ENCODE measurements at regions of chr6 and their contacts with region 1.

Region 1: DNA sequence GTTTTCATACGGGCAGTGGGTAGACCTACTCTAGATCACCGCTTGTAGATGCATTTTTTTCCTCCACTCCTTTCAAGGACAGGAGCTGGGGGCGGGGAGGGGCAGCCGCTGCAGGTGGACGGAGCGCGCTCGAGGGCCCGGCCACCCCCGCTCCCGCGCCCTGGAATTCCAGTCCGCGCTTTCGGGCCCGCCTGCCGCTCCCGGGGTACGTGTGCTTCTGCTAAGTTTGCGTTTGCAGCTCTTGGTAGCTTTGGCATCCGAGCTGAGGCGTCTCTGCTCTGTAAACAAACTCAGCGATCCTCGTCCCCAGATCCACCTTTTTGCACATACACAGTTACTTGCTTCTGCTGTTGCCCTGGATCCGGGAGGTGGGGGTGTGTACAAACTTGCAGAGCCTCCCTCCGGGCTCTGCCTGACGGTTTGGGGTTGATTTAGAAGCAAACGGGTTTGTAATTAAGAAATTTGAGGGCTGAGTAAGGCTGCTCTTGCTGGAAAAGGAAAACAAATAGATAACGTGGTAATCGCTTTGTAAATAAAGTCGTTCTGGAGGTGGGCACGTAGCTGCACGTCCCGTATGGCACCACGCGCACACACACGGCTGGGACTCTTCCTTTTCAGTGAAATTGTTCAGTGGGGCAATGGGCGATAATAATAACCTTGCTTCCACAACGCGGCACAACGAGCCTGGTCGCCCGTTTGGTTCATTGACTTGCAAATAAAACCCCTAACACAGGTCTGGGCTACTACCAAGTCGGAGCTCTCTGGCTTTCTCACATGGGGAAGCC is 976 bp upstream of the CITED2 start:
- DNase-seq: peak; percentile 90
- ATAC-seq: peak; percentile 57
- H3K4me3 Mint-ChIP-seq: peak overlapping the region; percentile 99
- H3K27ac Mint-ChIP-seq: peak overlapping the region; percentile 97
- H3K4me1 Mint-ChIP-seq: peaks cover 33% of the 10 kb centered on the region
- H3K27me3 Mint-ChIP-seq: no peaks in the 10 kb centered on the region

Region 2: GRCh38 chr6:138773177-138774091 is 602.0 kb before region 1 on chr6 and contains the start of gene CCDC28A:
- CTCF ChIA-PET with region 1: no interaction called
- POLR2A ChIA-PET with region 1: interaction called, 5 read pairs
- intact Hi-C with region 1: loop called in 1 of 2 experiments (anchors 1 kb)
- DNase-seq: peak; percentile 95
- ATAC-seq: peak; percentile 91
- H3K4me3 Mint-ChIP-seq: peak within 1 kb of the TSS; percentile 84
- H3K27ac Mint-ChIP-seq: peak within 1 kb of the TSS; percentile 98
- H3K4me1 Mint-ChIP-seq: peaks cover 31% of the 10 kb centered on the region
- H3K27me3 Mint-ChIP-seq: no peaks in the 10 kb centered on the region
- total RNA-seq, gene CCDC28A: 14.8 to 16.8 TPM

Region 3: GRCh38 chr6:139124887-139125672 is 250.3 kb before region 1 on chr6:
- CTCF ChIA-PET with region 1: interaction called, 13 read pairs
- POLR2A ChIA-PET with region 1: no interaction called
- intact Hi-C with region 1: loop called in 1 of 2 experiments (anchors 2 kb)
- DNase-seq: peak; percentile 90
- ATAC-seq: peak; percentile 96
- H3K4me3 Mint-ChIP-seq: peak overlapping the region; percentile 58
- H3K27ac Mint-ChIP-seq: peak overlapping the region; percentile 95
- H3K4me1 Mint-ChIP-seq: peaks cover 51% of the 10 kb centered on the region
- H3K27me3 Mint-ChIP-seq: no peaks in the 10 kb centered on the region

Region 4: GRCh38 chr6:139219271-139219729 is 156.1 kb before region 1 on chr6:
- CTCF ChIA-PET with region 1: interaction called, 94 read pairs
- POLR2A ChIA-PET with region 1: interaction called, 3 read pairs
- intact Hi-C with region 1: no loop called
- DNase-seq: peak; percentile 86
- ATAC-seq: peak; percentile 100
- H3K4me3 Mint-ChIP-seq: no peak overlapping the region
- H3K27ac Mint-ChIP-seq: peak overlapping the region; percentile 73
- H3K4me1 Mint-ChIP-seq: peaks cover 10% of the 10 kb centered on the region
- H3K27me3 Mint-ChIP-seq: no peaks in the 10 kb centered on the region

Region 5: GRCh38 chr6:139418480-139419117 is 43.2 kb after region 1 on chr6:
- CTCF ChIA-PET with region 1: no interaction called
- POLR2A ChIA-PET with region 1: no interaction called
- intact Hi-C with region 1: loop called in 1 of 2 experiments (anchors 1 kb)
- DNase-seq: no peak
- ATAC-seq: no peak
- H3K4me3 Mint-ChIP-seq: no peak overlapping the region
- H3K27ac Mint-ChIP-seq: no peak overlapping the region
- H3K4me1 Mint-ChIP-seq: no peaks in the 10 kb centered on the region
- H3K27me3 Mint-ChIP-seq: no peaks in the 10 kb centered on the region

Region 6: GRCh38 chr6:139881728-139882211 is 506.3 kb after region 1 on chr6:
- CTCF ChIA-PET with region 1: no interaction called
- POLR2A ChIA-PET with region 1: no interaction called
- intact Hi-C with region 1: loop called in 1 of 2 experiments (anchors 5 kb)
- DNase-seq: peak; percentile 33
- ATAC-seq: peak; percentile 61
- H3K4me3 Mint-ChIP-seq: no peak overlapping the region
- H3K27ac Mint-ChIP-seq: no peak overlapping the region
- H3K4me1 Mint-ChIP-seq: peaks cover 2% of the 10 kb centered on the region
- H3K27me3 Mint-ChIP-seq: peaks cover 2% of the 10 kb centered on the region

Region 7: DNA sequence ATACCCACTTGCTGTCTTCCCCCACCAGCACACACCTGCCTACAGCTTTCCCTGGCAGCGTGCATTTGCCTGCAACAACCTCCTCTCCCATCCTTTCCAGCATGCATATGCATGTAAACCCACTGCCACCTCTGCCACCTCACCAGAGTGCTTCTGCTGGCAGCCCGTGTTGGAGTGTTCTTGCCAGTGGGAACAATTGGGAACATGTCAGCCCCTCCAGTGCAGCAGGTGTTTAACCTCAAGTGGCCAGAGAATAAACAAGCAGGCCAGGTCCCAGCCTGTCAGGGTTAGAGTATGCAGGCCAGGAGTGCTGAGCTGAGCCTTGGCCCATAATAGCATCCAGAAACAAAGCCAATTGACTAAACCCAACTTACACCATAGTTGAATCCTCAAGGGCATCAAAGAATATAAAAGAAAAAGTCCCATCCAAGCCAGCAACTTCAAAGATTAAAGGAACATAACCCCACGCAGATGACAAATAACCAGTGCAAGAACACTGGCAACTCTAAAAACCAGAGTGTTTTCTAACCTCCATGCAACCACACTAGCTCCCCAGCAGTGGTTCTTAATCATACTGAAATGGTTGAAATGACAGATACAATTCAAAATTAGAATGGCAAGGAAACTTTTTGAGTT is 1211.1 kb after region 1 on chr6:
- CTCF ChIA-PET with region 1: no interaction called
- POLR2A ChIA-PET with region 1: no interaction called
- intact Hi-C with region 1: loop called in 1 of 2 experiments (anchors 2 kb)
- DNase-seq: peak; percentile 57
- ATAC-seq: peak; percentile 90
- H3K4me3 Mint-ChIP-seq: no peak overlapping the region
- H3K27ac Mint-ChIP-seq: peak overlapping the region; percentile 60
- H3K4me1 Mint-ChIP-seq: peaks cover 13% of the 10 kb centered on the region
- H3K27me3 Mint-ChIP-seq: peaks cover 4% of the 10 kb centered on the region